ENCODE measurements at regions of chr5 and their contacts with region 1.

Region 1: DNA sequence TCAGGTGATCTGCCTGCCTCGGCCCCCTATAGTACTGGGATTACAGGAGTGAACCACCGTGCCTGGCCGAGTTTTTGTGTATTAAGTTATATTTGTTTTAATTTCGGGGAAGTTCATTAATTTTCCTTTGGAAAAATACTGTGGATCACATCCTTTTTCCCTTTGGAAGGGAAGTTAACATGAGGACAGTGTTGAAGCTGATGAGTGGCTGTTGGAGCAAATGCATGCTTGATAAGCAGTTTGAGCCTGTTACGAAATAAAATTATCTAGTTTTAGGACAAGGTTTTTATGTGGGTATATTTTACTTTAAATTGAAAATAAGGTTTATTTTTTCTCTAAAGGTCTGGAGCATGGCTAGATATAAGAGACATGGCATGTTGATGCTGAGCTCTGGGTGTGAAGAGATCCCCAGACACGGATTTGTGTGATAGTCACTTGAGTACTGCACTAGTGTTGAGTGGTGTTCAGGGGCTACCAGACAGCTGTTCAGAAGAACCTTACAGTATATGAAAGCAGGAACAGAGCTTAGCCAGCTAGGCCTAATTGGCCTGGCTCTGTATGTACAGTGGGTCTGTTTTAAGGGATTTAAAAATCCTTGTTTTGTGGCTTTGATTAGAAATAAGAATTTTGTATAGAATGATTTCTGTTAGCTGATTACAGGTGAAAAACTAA is 17.4 kb downstream of the LMNB1 start:
- DNase-seq: no peak
- ATAC-seq: no peak

Region 2: DNA sequence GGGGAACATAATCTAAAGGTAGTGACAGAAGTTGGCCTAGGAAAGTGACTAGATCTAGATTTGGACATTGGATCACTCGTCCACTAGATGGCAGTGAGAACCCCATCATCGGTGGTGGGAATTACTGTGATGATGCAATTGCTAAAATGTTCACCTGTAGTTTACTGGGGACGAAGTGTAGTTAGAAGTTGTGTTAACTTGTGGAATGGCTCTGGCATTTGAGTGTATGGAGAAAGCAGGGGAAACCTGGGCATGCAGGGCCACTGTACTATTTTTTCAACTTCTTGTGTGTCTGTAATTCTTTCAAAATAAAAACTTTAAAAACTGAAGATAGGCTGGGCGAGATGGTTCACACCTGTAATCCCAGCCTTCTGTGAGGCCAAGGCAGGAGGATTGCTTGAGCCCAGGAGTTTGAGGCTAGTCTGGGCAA is 118.1 kb before region 1 on chr5:
- intact Hi-C with region 1: loop called (anchors 10 kb)
- DNase-seq: peak; percentile 68
- ATAC-seq: peak; percentile 81

Region 3: DNA sequence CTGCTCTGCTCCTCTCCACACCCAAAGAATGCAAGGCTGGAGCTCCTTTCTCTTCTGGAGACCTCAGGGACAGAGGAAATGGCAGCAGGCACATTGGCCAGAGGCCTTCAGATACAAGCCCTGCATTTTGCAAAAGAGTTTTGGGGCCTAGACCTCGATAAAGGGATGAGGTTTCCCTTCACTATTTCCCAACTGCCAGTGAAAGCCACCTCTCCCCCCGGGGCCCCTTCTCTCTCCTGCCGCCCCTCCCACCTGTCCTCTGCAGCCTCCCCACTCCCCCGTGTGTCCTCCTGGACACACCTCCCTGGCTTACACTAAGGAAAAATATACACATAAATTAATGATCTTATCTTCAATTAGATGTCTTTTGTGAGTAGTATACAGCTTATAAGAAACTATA is 38.7 kb before region 1 on chr5:
- intact Hi-C with region 1: no loop called
- DNase-seq: no peak
- ATAC-seq: no peak

Region 4: DNA sequence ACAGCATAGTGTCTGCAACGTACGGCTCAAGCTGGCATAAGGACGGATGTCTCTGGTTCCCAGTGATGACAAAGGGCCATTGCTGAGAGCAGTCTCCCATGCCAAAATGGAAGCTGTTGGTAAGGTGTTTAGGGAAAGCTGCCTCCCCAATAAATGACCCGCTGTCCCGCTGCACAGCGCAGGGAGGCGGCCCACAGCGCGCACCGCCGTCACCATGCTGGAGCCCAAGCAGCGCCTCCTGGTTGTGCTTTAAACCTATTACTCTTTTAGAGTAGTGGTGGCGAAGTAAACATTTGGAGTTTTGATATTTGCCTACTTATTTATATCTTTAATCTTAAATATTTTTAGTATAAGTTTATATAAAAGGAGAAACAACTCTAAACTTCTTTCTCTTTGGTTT is 349.4 kb after region 1 on chr5:
- intact Hi-C with region 1: no loop called
- DNase-seq: no peak
- ATAC-seq: no peak

Measured in sciatic nerve (tissue), 2 donors.